ENCODE measurements at regions of chr2 and their contacts with region 1.

Region 1: DNA sequence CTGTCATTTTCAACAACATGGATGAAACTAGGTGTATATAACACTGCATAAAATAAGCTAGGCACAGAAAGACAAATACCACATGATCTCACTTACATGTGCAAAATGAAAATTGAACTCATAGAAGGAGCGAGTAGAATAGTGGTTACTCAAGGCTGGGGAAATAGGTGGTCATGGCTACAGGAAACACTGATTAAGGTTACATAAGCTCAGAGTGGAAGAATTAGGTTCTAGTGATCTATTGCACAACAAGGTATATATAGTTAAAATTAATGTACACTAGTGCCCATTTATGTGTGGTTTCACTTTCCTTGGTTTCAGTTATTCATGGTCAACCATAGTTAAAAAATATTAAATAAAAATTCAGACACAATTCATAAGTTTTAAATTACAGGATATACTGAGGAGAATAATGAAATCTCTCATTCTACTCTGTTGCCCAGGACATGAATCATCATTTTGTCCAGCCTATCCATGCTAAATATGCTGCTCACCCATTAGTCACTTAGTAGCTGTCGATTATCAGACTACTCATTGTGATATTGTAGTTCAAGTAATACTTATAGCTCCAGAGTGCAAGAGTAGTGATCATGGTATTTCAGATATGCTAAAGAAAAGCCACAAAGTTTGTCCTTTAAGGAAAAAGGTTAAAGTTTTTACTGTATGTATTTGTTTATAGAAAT is 1530.9 kb upstream of the LRRTM1 start:
- DNase-seq: no peak
- H3K4me3 ChIP-seq: no peak overlapping the region
- H3K27ac ChIP-seq: no peak overlapping the region
- H3K4me1 ChIP-seq: no peaks in the 10 kb centered on the region
- H3K27me3 ChIP-seq: no peaks in the 10 kb centered on the region
- CTCF ChIP-seq: no peak
- POLR2A ChIP-seq: no peak

Region 2: GRCh38 chr2:81644189-81644588 is 191.3 kb before region 1 on chr2:
- intact Hi-C with region 1: loop called (anchors 5 kb)
- DNase-seq: no peak
- H3K4me3 ChIP-seq: no peak overlapping the region
- H3K27ac ChIP-seq: no peak overlapping the region
- H3K4me1 ChIP-seq: no peaks in the 10 kb centered on the region
- H3K27me3 ChIP-seq: no peaks in the 10 kb centered on the region
- CTCF ChIP-seq: no peak
- POLR2A ChIP-seq: no peak

Region 3: GRCh38 chr2:81870119-81870518 is 34.7 kb after region 1 on chr2:
- intact Hi-C with region 1: no loop called
- DNase-seq: no peak
- H3K4me3 ChIP-seq: no peak overlapping the region
- H3K27ac ChIP-seq: no peak overlapping the region
- H3K4me1 ChIP-seq: no peaks in the 10 kb centered on the region
- H3K27me3 ChIP-seq: no peaks in the 10 kb centered on the region
- CTCF ChIP-seq: no peak
- POLR2A ChIP-seq: no peak

Measured in breast epithelium (tissue), 4 donors.